Activated CD4-positive, alpha-beta T cell treated with anti-CD3 and anti-CD28 coated beads for 36 hours (primary cell): ENCODE measurements at regions of chr16 and their contacts with region 1.

Region 1: GRCh38 chr16:30813821-30814189 is 26.8 kb upstream of the ZNF629 start:
- DNase-seq: no peak
- ATAC-seq: peak; percentile 4
- H3K4me3 Mint-ChIP-seq: peak overlapping the region; percentile 87
- H3K27ac Mint-ChIP-seq: peak overlapping the region; percentile 81
- H3K4me1 Mint-ChIP-seq: peaks cover 12% of the 10 kb centered on the region
- H3K27me3 Mint-ChIP-seq: no peaks in the 10 kb centered on the region

Region 2: DNA sequence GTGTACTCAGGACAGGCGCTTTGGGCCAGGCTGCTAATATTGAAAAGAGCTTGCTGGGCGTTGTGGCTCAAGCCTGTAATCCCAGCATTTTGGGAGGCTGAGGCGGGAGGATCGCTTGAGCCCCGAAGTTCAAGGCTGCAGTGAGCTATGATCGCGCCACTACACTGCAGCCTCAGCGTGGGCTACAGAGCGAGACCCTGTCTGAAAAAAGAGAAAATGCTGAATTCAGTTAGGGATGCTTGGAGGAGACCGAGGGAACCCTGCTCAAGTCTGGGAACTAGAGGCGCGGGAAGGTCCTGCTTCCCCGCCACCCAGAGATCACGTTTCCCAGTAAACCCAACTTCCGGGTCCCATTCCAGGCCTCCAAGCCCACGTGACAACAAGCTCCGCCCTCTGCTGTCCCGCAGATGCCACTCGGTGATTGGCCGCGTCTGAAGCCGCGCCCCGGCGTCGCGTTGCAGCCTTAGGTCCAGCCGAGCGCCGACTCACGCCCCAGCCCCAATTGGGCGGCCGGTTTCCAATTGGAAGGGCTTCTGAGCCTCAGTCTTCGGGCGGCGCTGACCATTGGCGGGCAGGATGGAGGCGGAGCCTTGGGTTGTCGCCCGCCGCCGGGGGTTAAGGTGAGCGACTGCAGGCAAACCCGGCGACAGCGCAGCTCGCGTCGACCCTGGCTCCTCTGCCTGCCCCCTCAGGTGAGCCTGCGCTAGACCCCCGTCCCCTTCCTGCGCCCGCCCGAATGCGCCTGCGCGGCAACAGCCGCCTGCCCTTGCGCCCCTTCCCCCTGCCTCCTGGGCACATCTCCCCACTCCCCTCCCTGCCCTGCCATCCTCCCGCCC is 65.8 kb before region 1 on chr16 and contains the start of gene PHKG2:
- CTCF ChIA-PET with region 1: interaction called, 4 read pairs
- POLR2A ChIA-PET with region 1: interaction called, 4 read pairs
- intact Hi-C with region 1: loop called in 1 of 2 experiments (anchors 2 kb)
- DNase-seq: peak; percentile 99
- ATAC-seq: peak; percentile 99
- H3K4me3 Mint-ChIP-seq: peak within 1 kb of the TSS; percentile 88
- H3K27ac Mint-ChIP-seq: peak within 1 kb of the TSS; percentile 88
- H3K4me1 Mint-ChIP-seq: peaks cover 21% of the 10 kb centered on the region
- H3K27me3 Mint-ChIP-seq: no peaks in the 10 kb centered on the region
- total RNA-seq, gene PHKG2: 21.8 to 26.0 TPM

Region 3: DNA sequence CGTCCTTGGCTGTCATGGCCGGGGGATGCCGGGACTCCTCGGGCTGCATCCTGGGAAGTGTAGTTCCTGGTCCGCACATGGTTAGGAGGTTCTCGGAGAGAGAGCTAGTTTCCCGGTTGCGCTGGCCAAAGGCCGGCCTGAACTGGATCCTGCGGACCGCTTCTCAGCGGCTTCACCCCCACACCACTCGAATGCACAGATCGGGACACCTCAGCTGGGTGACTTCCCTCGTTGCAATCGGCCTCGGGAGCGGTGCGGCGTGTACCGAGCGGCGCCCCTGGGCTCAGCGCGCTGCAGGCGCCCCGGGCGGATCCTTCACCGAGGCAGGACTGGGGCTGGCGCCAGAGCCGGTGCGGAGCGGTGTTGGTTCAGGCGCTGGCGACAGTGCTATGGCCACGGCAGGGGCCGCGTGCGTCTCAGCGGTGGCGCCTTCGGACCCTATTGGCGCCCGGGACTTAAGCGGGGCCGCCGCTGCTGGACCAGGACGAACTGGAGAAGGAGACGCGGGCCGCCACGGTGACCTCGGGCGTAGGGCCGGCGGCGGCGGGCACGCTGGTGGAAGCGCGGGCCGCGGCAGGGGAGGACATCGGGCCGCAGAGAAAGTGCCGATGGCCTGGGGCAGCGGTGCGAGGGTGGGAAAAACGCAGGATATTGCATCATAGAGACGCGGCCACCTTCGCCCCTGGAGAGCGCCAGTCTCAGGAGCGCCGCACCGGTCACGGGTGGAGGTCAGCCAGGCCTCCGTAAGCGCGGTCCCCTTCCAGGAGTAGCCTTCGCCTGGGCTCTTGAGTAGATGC is 38.2 kb before region 1 on chr16:
- CTCF ChIA-PET with region 1: interaction called, 5 read pairs
- POLR2A ChIA-PET with region 1: interaction called, 3 read pairs
- intact Hi-C with region 1: loop called in 1 of 2 experiments (anchors 1 kb)
- DNase-seq: peak; percentile 80
- ATAC-seq: peak; percentile 85
- H3K4me3 Mint-ChIP-seq: peak overlapping the region; percentile 83
- H3K27ac Mint-ChIP-seq: peak overlapping the region; percentile 93
- H3K4me1 Mint-ChIP-seq: peaks cover 15% of the 10 kb centered on the region
- H3K27me3 Mint-ChIP-seq: no peaks in the 10 kb centered on the region

Region 4: GRCh38 chr16:30874821-30875717 is 61.3 kb after region 1 on chr16:
- CTCF ChIA-PET with region 1: interaction called, 11 read pairs
- POLR2A ChIA-PET with region 1: no interaction called
- intact Hi-C with region 1: loop called in 1 of 2 experiments (anchors 2 kb)
- DNase-seq: peak; percentile 94
- ATAC-seq: peak; percentile 82
- H3K4me3 Mint-ChIP-seq: peak overlapping the region; percentile 87
- H3K27ac Mint-ChIP-seq: peak overlapping the region; percentile 93
- H3K4me1 Mint-ChIP-seq: peaks cover 24% of the 10 kb centered on the region
- H3K27me3 Mint-ChIP-seq: no peaks in the 10 kb centered on the region

Region 5: GRCh38 chr16:30902029-30902972 is 88.5 kb after region 1 on chr16:
- CTCF ChIA-PET with region 1: interaction called, 11 read pairs
- POLR2A ChIA-PET with region 1: no interaction called
- intact Hi-C with region 1: loop called in 1 of 2 experiments (anchors 1 kb)
- DNase-seq: peak; percentile 77
- ATAC-seq: peak; percentile 87
- H3K4me3 Mint-ChIP-seq: peak overlapping the region; percentile 80
- H3K27ac Mint-ChIP-seq: peak overlapping the region; percentile 99
- H3K4me1 Mint-ChIP-seq: peaks cover 25% of the 10 kb centered on the region
- H3K27me3 Mint-ChIP-seq: no peaks in the 10 kb centered on the region

Region 6: DNA sequence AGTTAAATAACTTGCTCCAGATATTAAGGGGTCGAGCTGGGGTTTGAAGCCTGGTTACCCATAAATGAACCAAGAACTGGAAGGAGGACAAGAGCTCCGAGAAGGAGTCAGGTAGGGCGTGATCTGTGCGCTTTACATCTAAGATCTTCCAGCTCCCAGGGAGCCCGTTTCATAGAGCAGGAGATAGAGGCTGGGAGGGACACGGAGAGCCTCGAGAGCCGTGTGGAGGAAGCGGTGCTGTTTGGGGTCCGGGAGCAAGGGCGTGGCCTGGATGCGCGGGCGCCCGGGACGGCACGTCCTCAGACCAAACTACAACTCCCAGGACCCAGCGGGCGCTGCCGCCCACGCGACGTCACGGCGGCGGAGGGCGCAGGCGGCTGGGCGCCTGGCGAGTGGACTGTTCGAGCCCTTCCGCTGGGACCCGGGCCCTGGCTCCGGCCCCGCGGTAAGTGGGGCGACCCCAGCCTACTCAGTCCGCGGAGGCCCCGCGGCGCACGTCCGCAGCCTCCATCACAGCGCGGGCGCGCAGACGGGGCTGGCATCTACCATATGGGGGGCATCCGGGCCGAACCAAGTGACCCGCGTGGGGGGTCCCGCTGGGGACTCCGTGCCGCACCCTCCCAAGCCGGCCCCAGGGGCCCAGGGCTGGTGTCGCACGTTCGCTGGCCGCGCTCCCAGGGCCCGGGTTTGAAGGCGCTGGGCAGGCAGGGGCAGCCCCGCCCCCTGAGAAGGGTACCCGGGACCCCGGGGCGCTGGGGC is 294.4 kb after region 1 on chr16 and contains the start of gene BCKDK:
- CTCF ChIA-PET with region 1: no interaction called
- POLR2A ChIA-PET with region 1: no interaction called
- intact Hi-C with region 1: no loop called
- DNase-seq: peak; percentile 90
- ATAC-seq: peak; percentile 79
- H3K4me3 Mint-ChIP-seq: peak within 1 kb of the TSS; percentile 86
- H3K27ac Mint-ChIP-seq: peak within 1 kb of the TSS; percentile 96
- H3K4me1 Mint-ChIP-seq: peaks cover 22% of the 10 kb centered on the region
- H3K27me3 Mint-ChIP-seq: no peaks in the 10 kb centered on the region
- total RNA-seq, gene BCKDK: 50.0 to 53.3 TPM